Naive thymus-derived CD4-positive, alpha-beta T cell (primary cell): ENCODE measurements at regions of chr12 and their contacts with region 1.

Region 1: DNA sequence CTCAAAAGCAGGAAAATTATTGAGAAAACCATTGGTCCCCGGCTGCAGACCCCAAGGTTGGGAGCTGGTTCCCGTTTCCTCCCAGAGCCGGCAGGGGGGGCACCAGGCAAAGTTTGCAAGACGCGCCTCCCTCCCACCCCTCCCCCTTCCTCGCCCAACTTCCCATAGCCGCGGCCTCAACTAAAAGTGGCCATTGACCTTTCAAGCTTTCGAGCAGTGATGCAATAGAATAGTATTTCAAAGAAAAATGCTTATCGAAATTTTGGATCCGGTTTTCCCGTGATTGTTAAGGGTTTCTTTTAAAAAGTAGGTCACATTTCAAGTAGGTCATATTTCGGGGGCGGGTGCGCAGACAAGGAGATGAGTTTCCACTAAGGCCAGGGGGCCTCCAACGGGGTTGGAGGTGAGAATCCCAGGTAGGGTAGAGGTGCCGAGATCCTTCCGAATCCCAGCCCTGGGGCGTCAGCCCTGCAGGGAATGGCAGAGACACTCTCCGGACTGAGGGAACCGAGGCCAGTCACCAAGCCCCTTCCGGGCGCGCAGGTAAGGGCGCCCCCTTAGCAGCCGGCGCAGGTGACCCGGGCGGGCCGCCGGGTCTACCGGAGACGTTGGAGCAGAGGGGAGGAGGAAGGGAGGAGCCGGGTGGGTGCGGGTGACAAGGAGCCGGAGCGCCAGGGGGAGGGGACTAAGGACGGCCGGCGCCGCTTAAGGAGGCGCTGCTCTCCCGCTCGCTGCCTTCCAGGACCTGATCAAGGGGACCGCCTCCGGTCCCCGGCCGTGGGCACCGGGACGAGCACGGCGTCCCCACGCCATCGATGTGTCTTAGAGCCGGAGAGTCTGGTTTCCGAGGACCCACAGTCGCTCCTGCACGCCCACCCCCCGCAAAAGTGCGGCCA is 2.6 kb upstream of the SOCS2 start:
- DNase-seq: peak; percentile 34 to 76 (median 66)
- ATAC-seq: peak; percentile 58
- H3K4me3 ChIP-seq: peak overlapping the region; percentile 89
- H3K4me3 Mint-ChIP-seq: peak overlapping the region; percentile 88 to 98 (median 93)
- H3K27ac ChIP-seq: peak overlapping the region; percentile 78
- H3K27ac Mint-ChIP-seq: peak overlapping the region; percentile 70 to 91 (median 84)
- H3K4me1 ChIP-seq: peaks cover 14 to 16% of the 10 kb centered on the region in 2 donors
- H3K4me1 Mint-ChIP-seq: peaks cover 24 to 37% (median 30%) of the 10 kb centered on the region in 7 donors
- H3K27me3 ChIP-seq: no peaks in the 10 kb centered on the region
- H3K27me3 Mint-ChIP-seq: peaks cover 0 to 15% (median 0%) of the 10 kb centered on the region in 5 donors

Region 2: GRCh38 chr12:93378373-93379325 is 191.3 kb before region 1 on chr12:
- CTCF ChIA-PET with region 1: no interaction called
- POLR2A ChIA-PET with region 1: interaction called, 3 read pairs
- intact Hi-C with region 1: loop called (anchors 1 to 2 kb)
- DNase-seq: peak; percentile 47 to 73 (median 69)
- ATAC-seq: peak; percentile 60
- H3K4me3 ChIP-seq: peak overlapping the region; percentile 76
- H3K4me3 Mint-ChIP-seq: peak overlapping the region; percentile 98 to 100 (median 99)
- H3K27ac ChIP-seq: peak overlapping the region; percentile 94
- H3K27ac Mint-ChIP-seq: peak overlapping the region; percentile 94 to 100 (median 99)
- H3K4me1 ChIP-seq: peaks cover 19 to 22% of the 10 kb centered on the region in 2 donors
- H3K4me1 Mint-ChIP-seq: peaks cover 34 to 62% (median 51%) of the 10 kb centered on the region in 7 donors
- H3K27me3 ChIP-seq: no peaks in the 10 kb centered on the region
- H3K27me3 Mint-ChIP-seq: no peaks in the 10 kb centered on the region

Region 3: GRCh38 chr12:93677195-93678064 is 107.5 kb after region 1 on chr12 and contains the start of gene CRADD:
- CTCF ChIA-PET with region 1: interaction called, 5 read pairs
- POLR2A ChIA-PET with region 1: interaction called, 7 read pairs
- intact Hi-C with region 1: loop called (anchors 1 kb)
- DNase-seq: peak; percentile 75 to 97 (median 95)
- ATAC-seq: peak; percentile 95
- H3K4me3 ChIP-seq: peak within 1 kb of the TSS; percentile 93
- H3K4me3 Mint-ChIP-seq: peak within 1 kb of the TSS; percentile 82 to 100 (median 98)
- H3K27ac ChIP-seq: peak within 1 kb of the TSS; percentile 99
- H3K27ac Mint-ChIP-seq: peak within 1 kb of the TSS; percentile 97 to 100 (median 100)
- H3K4me1 ChIP-seq: peaks cover 5 to 9% of the 10 kb centered on the region in 2 donors
- H3K4me1 Mint-ChIP-seq: peaks cover 19 to 56% (median 41%) of the 10 kb centered on the region in 7 donors
- H3K27me3 ChIP-seq: no peaks in the 10 kb centered on the region
- H3K27me3 Mint-ChIP-seq: peaks cover 2 to 13% (median 9%) of the 10 kb centered on the region in 5 donors
- total RNA-seq, gene CRADD: 11.4 to 17.1 (median 13.8) TPM

Region 4: GRCh38 chr12:93979189-93979588 is 409.3 kb after region 1 on chr12:
- CTCF ChIA-PET with region 1: interaction called, 5 read pairs
- POLR2A ChIA-PET with region 1: no interaction called
- intact Hi-C with region 1: loop called (anchors 1 kb)
- DNase-seq: peak in 4 of 9 donors; percentile 21 to 51 (median 31)
- ATAC-seq: peak; percentile 27
- H3K4me3 ChIP-seq: no peak overlapping the region
- H3K4me3 Mint-ChIP-seq: no peak overlapping the region
- H3K27ac ChIP-seq: no peak overlapping the region
- H3K27ac Mint-ChIP-seq: peak overlapping the region in 1 of 9 donors; percentile 27
- H3K4me1 ChIP-seq: no peaks in the 10 kb centered on the region
- H3K4me1 Mint-ChIP-seq: peaks cover 13 to 48% (median 30%) of the 10 kb centered on the region in 7 donors
- H3K27me3 ChIP-seq: no peaks in the 10 kb centered on the region
- H3K27me3 Mint-ChIP-seq: peaks cover 0 to 6% (median 0%) of the 10 kb centered on the region in 5 donors

Region 5: GRCh38 chr12:94262228-94263010 is 692.5 kb after region 1 on chr12:
- CTCF ChIA-PET with region 1: no interaction called
- POLR2A ChIA-PET with region 1: no interaction called
- intact Hi-C with region 1: loop called (anchors 1 to 2 kb)
- DNase-seq: peak; percentile 50 to 81 (median 72)
- ATAC-seq: peak; percentile 89
- H3K4me3 ChIP-seq: peak overlapping the region; percentile 94
- H3K4me3 Mint-ChIP-seq: peak overlapping the region; percentile 80 to 99 (median 97)
- H3K27ac ChIP-seq: peak overlapping the region; percentile 91
- H3K27ac Mint-ChIP-seq: peak overlapping the region; percentile 91 to 100 (median 99)
- H3K4me1 ChIP-seq: peaks cover 15 to 18% of the 10 kb centered on the region in 2 donors
- H3K4me1 Mint-ChIP-seq: peaks cover 23 to 52% (median 46%) of the 10 kb centered on the region in 7 donors
- H3K27me3 ChIP-seq: no peaks in the 10 kb centered on the region
- H3K27me3 Mint-ChIP-seq: no peaks in the 10 kb centered on the region

Region 6: DNA sequence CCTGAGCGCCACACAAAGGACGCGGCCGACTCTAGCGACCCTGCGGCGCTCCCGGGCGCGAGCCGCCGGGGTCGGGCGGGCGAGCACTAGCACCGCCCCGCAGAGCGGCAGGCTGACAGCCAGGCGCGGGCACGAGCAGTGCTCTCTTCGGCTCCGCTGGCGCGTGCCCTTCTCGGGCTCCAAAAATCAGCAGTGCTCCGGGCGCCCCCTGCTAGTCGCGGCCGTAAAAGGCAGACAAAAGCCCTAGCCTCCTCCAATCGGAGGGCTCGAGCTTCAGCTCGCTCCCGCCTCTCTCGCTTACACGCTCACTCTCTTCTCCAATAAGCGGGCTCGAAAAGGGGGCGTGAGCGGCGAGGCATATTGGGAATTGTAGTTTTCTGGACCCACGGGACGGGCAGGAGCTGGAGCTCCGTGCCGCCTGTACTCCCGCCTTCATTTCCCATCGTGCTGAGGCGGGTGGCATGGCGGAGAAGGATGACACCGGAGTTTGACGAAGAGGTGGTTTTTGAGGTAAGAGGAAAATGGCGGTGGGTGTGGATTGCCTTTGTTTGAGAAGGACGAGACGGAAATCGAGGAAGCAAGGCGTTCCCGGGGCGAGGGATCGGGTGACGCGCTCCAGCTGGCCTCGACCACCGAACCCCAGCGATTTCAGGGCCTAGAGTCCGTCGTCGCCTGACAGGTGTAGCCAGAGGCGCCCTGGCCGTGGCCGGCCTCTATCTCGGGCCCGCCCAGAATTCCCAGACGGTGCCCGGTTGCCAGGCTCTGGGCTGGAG is 1647.7 kb after region 1 on chr12 and contains the starts of genes FGD6 and VEZT:
- CTCF ChIA-PET with region 1: no interaction called
- POLR2A ChIA-PET with region 1: no interaction called
- intact Hi-C with region 1: loop called in 1 of 2 experiments (anchors 2 kb)
- DNase-seq: peak; percentile 90 to 99 (median 98)
- ATAC-seq: peak; percentile 94
- H3K4me3 ChIP-seq: peak within 1 kb of the TSS; percentile 87
- H3K4me3 Mint-ChIP-seq: peak within 1 kb of the TSS; percentile 88 to 100 (median 96)
- H3K27ac ChIP-seq: peak within 1 kb of the TSS; percentile 94
- H3K27ac Mint-ChIP-seq: peak within 1 kb of the TSS; percentile 86 to 97 (median 95)
- H3K4me1 ChIP-seq: peaks cover 0 to 8% of the 10 kb centered on the region in 2 donors
- H3K4me1 Mint-ChIP-seq: peaks cover 25 to 53% (median 45%) of the 10 kb centered on the region in 7 donors
- H3K27me3 ChIP-seq: no peaks in the 10 kb centered on the region
- H3K27me3 Mint-ChIP-seq: peaks cover 0 to 20% (median 7%) of the 10 kb centered on the region in 5 donors
- total RNA-seq, gene FGD6: 0.70 to 8.6 (median 1.1) TPM
- total RNA-seq, gene VEZT: 37.2 to 48.8 (median 44.2) TPM